ENCODE measurements at regions of chr7 and their contacts with region 1.

Region 1: DNA sequence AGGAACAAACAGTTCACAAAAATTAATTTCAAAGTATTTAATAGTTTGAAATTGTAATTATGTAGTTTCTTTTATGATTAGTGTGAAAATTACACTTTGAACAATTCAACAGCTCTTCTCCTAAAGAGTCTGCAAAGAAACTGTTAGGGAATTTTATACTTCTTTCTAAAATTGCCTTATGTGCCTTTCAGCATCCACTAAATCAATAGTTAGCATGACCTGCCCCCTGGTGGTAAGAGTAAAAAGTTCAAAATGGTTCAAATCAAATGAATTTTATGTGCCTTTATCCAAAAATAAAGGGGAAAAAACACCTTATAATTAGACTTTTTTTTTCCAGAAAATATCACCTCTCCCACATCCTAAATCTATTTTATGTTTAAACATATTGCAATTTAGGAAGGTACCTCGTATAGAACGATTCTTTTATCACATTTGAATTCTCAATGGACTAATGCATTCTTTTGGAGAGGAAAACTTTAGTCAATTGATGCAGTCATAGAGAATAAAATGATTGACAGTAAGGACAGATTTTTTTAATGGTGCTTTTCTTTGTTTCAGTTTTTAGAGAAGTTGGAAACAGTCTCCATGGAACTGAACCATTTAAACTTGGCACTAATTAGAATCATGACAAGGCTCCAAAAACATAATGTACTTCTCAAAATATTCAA is 163.7 kb downstream of the SEMA3D start:
- DNase-seq: peak in 1 of 3 donors; percentile 58
- ATAC-seq: no peak
- H3K4me3 ChIP-seq: no peak overlapping the region
- H3K4me1 ChIP-seq: peaks cover 4% of the 10 kb centered on the region
- CTCF ChIP-seq: peak; percentile 24

Region 2: GRCh38 chr7:83936056-83936708 is 1087.0 kb before region 1 on chr7:
- intact Hi-C with region 1: loop called (anchors 2 to 5 kb)
- DNase-seq: peak in 2 of 3 donors; percentile 33 to 71
- ATAC-seq: peak; percentile 67
- H3K4me3 ChIP-seq: no peak overlapping the region
- H3K4me1 ChIP-seq: no peaks in the 10 kb centered on the region
- CTCF ChIP-seq: peak; percentile 59

Region 3: GRCh38 chr7:83976295-83976694 is 1046.9 kb before region 1 on chr7:
- intact Hi-C with region 1: loop called in 1 of 2 experiments (anchors 5 kb)
- DNase-seq: peak in 1 of 3 donors; percentile 50
- ATAC-seq: peak; percentile 58
- H3K4me3 ChIP-seq: no peak overlapping the region
- H3K4me1 ChIP-seq: no peaks in the 10 kb centered on the region
- CTCF ChIP-seq: no peak

Measured in mucosa of descending colon (tissue), 3 donors.